CD4-positive, alpha-beta memory T cell (primary cell): ENCODE measurements at regions of chr7 and their contacts with region 1.

Region 1: DNA sequence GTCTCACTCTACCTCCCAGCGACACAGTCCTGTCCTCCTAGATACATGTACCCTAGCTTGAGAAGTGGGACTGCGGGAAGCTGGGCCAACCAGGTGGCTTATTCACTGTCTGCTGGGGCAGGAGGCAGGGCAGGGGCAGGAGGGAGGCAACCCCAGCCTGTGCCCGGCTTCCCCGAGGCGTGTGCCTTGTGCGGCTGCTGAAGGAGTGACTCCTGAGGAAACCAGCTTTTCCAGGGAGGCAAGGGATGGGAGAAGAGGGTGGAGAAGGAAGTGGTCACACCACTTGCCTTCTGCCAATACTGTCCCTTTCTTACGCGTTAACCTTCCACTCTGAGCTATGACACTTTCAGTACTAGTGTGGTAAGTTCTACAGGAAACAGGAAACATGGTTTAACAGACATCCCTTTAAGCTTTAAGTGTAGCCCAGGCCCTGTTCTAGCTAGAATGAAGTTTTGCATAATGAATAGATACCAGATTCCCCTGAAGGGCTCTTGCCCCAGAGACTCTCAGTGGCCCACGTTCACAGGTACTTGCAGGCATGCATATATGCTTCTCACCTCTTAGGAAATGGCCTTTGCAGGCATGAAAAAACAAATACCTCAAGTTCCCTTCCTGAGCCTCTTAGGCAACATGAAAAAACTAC is 40.6 kb downstream of the SYPL1 start:
- DNase-seq: peak; percentile 54 to 69 (median 63)
- H3K4me3 ChIP-seq: peak overlapping the region in 1 of 2 donors; percentile 49
- H3K4me3 Mint-ChIP-seq: peak overlapping the region; percentile 73 to 86 (median 82)
- H3K27ac ChIP-seq: peak overlapping the region; percentile 52
- H3K27ac Mint-ChIP-seq: peak overlapping the region; percentile 86 to 95 (median 94)
- H3K4me1 ChIP-seq: peaks cover 43% of the 10 kb centered on the region
- H3K4me1 Mint-ChIP-seq: peaks cover 28 to 62% (median 42%) of the 10 kb centered on the region in 4 donors
- H3K27me3 ChIP-seq: no peaks in the 10 kb centered on the region
- H3K27me3 Mint-ChIP-seq: no peaks in the 10 kb centered on the region

Region 2: DNA sequence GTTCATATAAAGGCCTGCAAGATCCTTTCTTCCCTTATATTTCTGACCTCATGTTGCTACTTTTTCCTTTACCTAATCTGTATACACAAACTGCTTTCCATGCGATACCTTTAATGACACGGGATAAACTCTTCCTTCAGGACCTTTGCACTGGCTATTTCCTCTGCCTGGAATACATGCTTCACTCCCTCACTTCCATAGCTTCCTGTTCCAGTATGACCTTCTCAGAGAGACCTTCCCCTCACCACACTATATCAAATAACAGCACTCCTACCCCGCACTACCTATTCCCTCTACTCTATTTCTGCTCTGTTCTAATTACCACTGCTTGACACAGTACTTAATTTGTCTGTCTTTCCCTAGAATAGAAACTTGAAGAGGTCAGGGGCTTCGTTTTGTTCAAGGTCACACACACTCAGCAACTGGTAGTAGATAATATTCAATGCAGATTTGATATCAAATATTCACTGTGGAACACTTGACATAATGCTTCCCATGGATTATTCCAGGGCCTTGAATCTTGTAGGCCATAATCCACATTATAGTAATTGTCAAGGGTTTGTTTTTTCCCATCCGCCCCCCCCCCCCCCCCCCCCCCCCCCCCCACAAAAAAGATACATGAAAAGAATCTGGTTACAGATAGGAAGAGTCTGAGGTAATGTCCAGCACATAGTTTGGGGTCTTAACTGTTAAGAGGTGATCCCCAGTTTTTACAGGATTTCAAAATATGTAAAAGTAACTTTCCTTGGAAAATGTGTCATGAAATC is 29.6 kb after region 1 on chr7:
- CTCF ChIA-PET with region 1: interaction called, 4 read pairs
- POLR2A ChIA-PET with region 1: interaction called, 11 read pairs
- intact Hi-C with region 1: no loop called
- DNase-seq: no peak
- H3K4me3 ChIP-seq: no peak overlapping the region
- H3K4me3 Mint-ChIP-seq: no peak overlapping the region
- H3K27ac ChIP-seq: no peak overlapping the region
- H3K27ac Mint-ChIP-seq: peak overlapping the region in 3 of 7 donors; percentile 17 to 46 (median 23)
- H3K4me1 ChIP-seq: peaks cover 38% of the 10 kb centered on the region
- H3K4me1 Mint-ChIP-seq: peaks cover 45 to 65% (median 56%) of the 10 kb centered on the region in 4 donors
- H3K27me3 ChIP-seq: no peaks in the 10 kb centered on the region
- H3K27me3 Mint-ChIP-seq: no peaks in the 10 kb centered on the region

Region 3: DNA sequence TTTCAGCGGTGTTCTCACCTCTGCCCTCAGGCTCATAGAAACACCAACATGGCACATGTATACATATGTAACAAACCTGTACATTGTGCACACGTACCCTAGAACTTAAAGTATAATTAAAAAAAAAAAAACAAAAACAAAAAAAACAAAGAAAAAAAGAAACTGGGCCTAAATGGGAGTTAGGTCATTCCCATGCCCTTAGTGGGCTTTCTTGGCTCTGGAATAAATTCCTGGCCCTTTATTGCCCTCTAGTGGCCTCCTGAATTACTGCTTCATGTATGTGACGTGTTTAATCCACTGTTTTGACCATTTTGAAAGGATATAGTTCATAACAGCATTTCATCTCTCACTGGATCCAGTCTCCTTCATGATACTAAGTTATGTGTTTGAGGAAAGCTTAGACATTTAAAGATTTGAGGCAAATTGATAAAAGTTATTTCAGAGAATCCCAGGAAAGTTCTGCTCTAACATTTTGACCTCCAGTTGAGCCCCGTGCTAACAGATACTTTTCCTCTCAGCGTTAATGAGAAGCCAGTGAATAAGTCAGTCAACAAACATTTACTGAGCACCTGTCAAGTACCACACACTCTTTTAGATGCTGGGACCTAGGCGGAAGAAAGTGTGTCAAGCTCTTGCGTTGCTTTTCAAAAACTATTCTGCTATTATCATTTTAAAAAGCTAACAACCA is 95.3 kb after region 1 on chr7:
- CTCF ChIA-PET with region 1: interaction called, 423 read pairs
- POLR2A ChIA-PET with region 1: no interaction called
- intact Hi-C with region 1: no loop called
- DNase-seq: peak in 4 of 5 donors; percentile 33 to 41 (median 36)
- H3K4me3 ChIP-seq: no peak overlapping the region
- H3K4me3 Mint-ChIP-seq: no peak overlapping the region
- H3K27ac ChIP-seq: no peak overlapping the region
- H3K27ac Mint-ChIP-seq: peak overlapping the region in 1 of 7 donors; percentile 39
- H3K4me1 ChIP-seq: no peaks in the 10 kb centered on the region
- H3K4me1 Mint-ChIP-seq: no peaks in the 10 kb centered on the region
- H3K27me3 ChIP-seq: no peaks in the 10 kb centered on the region
- H3K27me3 Mint-ChIP-seq: peaks cover 6 to 7% of the 10 kb centered on the region in 2 donors

Region 4: GRCh38 chr7:106430094-106430493 is 358.6 kb after region 1 on chr7:
- CTCF ChIA-PET with region 1: no interaction called
- POLR2A ChIA-PET with region 1: no interaction called
- intact Hi-C with region 1: no loop called
- DNase-seq: no peak
- H3K4me3 ChIP-seq: no peak overlapping the region
- H3K4me3 Mint-ChIP-seq: no peak overlapping the region
- H3K27ac ChIP-seq: no peak overlapping the region
- H3K27ac Mint-ChIP-seq: no peak overlapping the region
- H3K4me1 ChIP-seq: peaks cover 4% of the 10 kb centered on the region
- H3K4me1 Mint-ChIP-seq: peaks cover under 1 to 4% (median 2%) of the 10 kb centered on the region in 4 donors
- H3K27me3 ChIP-seq: no peaks in the 10 kb centered on the region
- H3K27me3 Mint-ChIP-seq: peaks cover 3 to 7% of the 10 kb centered on the region in 2 donors